Naive thymus-derived CD4-positive, alpha-beta T cell (primary cell): ENCODE measurements at regions of chr11 and their contacts with region 1.

Region 1: DNA sequence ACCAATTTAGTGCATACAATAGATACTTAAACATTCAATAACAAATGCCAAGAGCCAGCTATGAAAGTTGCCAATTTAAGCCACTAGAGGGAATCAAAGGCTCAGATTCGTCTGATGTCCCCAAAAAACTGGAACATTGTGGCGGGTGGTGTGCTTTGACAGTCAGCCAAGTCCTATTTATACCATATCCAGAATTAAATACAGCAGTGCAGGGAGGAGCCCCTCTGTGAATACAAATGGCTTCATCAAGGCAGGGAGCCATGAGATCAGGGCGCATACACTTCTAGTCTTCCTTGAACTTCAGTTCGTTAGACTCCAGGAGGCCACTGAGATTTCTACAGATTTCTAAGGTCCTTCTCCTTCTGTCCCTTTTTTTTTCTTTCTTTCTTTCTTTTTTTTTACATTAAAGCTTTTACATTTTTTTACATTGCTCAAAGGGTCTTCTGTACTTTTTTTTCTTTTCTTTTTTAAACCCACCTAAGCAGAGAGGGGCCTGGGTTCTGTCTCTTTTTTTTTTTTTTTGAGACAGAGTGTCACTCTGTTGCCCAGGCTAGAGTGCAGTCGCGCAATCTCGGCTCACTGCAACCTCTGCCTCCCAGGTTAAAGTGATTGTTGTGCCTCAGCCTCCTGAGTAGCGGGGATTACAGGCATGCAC is 41.5 kb upstream of the HSPA8 start:
- DNase-seq: peak in 7 of 9 donors; percentile 38 to 63 (median 51)
- ATAC-seq: peak; percentile 76
- H3K4me3 ChIP-seq: no peak overlapping the region
- H3K4me3 Mint-ChIP-seq: peak overlapping the region in 5 of 10 donors; percentile 14 to 63 (median 14)
- H3K27ac ChIP-seq: no peak overlapping the region
- H3K27ac Mint-ChIP-seq: peak overlapping the region in 8 of 9 donors; percentile 8 to 91 (median 51)
- H3K4me1 ChIP-seq: peaks cover 0 to 15% of the 10 kb centered on the region in 2 donors
- H3K4me1 Mint-ChIP-seq: peaks cover 16 to 43% (median 38%) of the 10 kb centered on the region in 7 donors
- H3K27me3 ChIP-seq: no peaks in the 10 kb centered on the region
- H3K27me3 Mint-ChIP-seq: peaks cover 0 to 7% (median 0%) of the 10 kb centered on the region in 5 donors

Region 2: DNA sequence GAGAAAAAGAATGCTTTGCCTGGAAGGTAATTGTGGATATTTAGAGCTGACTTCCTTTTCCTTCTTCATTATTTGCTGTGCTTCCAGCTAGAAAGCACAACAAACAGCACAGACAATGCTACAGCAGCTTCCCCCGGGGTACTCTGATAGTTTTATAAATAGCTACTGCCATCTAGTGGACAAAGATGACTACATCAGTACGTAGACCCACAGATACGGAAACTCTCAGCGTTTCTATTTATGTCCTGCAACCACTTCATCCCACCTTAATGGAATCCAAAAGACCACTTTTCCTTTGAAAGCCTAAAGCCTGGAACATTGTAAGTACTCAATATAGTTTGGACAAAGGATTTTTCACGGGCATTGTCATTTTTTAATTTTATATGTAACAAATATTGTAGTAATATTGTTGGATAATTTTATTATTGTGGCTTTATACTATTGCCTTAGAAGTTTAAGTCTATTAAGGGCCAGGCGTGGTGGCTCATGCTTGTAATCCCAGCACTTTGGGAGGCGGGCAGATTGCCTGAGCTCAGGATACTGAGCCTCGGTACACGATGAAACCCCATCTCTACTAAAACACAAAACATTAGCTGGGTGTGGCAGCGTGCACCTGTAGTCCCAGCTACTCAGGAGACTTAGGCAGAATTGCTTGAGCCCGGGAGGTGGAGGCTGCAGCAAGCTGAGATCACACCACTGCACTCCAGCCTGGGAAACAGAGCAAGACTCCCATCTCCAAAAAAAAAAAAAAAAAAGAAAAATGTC is 49.0 kb before region 1 on chr11:
- CTCF ChIA-PET with region 1: interaction called, 119 read pairs
- POLR2A ChIA-PET with region 1: interaction called, 532 read pairs
- intact Hi-C with region 1: loop called in 1 of 2 experiments (anchors 1 kb)
- DNase-seq: peak in 7 of 9 donors; percentile 52 to 75 (median 67)
- ATAC-seq: peak; percentile 87
- H3K4me3 ChIP-seq: peak overlapping the region; percentile 11
- H3K4me3 Mint-ChIP-seq: peak overlapping the region in 9 of 10 donors; percentile 20 to 100 (median 65)
- H3K27ac ChIP-seq: peak overlapping the region; percentile 38
- H3K27ac Mint-ChIP-seq: peak overlapping the region; percentile 69 to 100 (median 92)
- H3K4me1 ChIP-seq: peaks cover 50 to 56% of the 10 kb centered on the region in 2 donors
- H3K4me1 Mint-ChIP-seq: peaks cover 42 to 60% (median 55%) of the 10 kb centered on the region in 7 donors
- H3K27me3 ChIP-seq: no peaks in the 10 kb centered on the region
- H3K27me3 Mint-ChIP-seq: no peaks in the 10 kb centered on the region

Region 3: DNA sequence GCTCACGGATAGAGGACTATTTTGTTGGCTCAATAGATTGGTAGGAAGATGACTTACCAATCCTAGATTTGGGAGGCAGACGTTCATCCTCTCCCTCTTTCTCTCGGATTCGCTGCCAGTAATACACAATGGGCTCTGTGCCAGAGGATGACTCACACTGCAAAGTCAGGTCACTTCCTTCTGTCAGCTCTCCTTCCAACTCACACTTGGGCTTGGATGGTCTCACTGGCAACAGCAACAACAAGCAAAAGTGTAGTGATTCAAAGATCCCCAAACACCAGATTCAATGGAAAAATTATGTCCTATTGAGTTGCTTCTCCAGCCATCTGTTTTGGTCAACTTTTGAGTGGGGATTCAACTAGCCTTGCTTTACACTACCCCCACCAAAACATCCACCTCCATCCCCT is 19.8 kb before region 1 on chr11:
- CTCF ChIA-PET with region 1: interaction called, 16 read pairs
- POLR2A ChIA-PET with region 1: interaction called, 76 read pairs
- intact Hi-C with region 1: loop called (anchors 1 kb)
- DNase-seq: peak in 4 of 9 donors; percentile 26 to 74 (median 52)
- ATAC-seq: peak; percentile 71
- H3K4me3 ChIP-seq: peak overlapping the region; percentile 17
- H3K4me3 Mint-ChIP-seq: peak overlapping the region; percentile 34 to 79 (median 68)
- H3K27ac ChIP-seq: no peak overlapping the region
- H3K27ac Mint-ChIP-seq: peak overlapping the region; percentile 51 to 98 (median 82)
- H3K4me1 ChIP-seq: peaks cover 27 to 54% of the 10 kb centered on the region in 2 donors
- H3K4me1 Mint-ChIP-seq: peaks cover 34 to 74% (median 55%) of the 10 kb centered on the region in 7 donors
- H3K27me3 ChIP-seq: no peaks in the 10 kb centered on the region
- H3K27me3 Mint-ChIP-seq: no peaks in the 10 kb centered on the region

Region 4: GRCh38 chr11:123560006-123560405 is 456.6 kb after region 1 on chr11:
- CTCF ChIA-PET with region 1: no interaction called
- POLR2A ChIA-PET with region 1: no interaction called
- intact Hi-C with region 1: loop called in 1 of 2 experiments (anchors 10 kb)
- DNase-seq: peak in 6 of 9 donors; percentile 31 to 76 (median 57)
- ATAC-seq: peak; percentile 81
- H3K4me3 ChIP-seq: no peak overlapping the region
- H3K4me3 Mint-ChIP-seq: peak overlapping the region; percentile 75 to 95 (median 82)
- H3K27ac ChIP-seq: no peak overlapping the region
- H3K27ac Mint-ChIP-seq: peak overlapping the region in 7 of 9 donors; percentile 19 to 88 (median 79)
- H3K4me1 ChIP-seq: peaks cover 0 to 7% of the 10 kb centered on the region in 2 donors
- H3K4me1 Mint-ChIP-seq: peaks cover 7 to 32% (median 18%) of the 10 kb centered on the region in 7 donors
- H3K27me3 ChIP-seq: no peaks in the 10 kb centered on the region
- H3K27me3 Mint-ChIP-seq: peaks cover 0 to 4% (median 0%) of the 10 kb centered on the region in 5 donors